ENCODE measurements at regions of chr9 and their contacts with region 1.

Region 1: DNA sequence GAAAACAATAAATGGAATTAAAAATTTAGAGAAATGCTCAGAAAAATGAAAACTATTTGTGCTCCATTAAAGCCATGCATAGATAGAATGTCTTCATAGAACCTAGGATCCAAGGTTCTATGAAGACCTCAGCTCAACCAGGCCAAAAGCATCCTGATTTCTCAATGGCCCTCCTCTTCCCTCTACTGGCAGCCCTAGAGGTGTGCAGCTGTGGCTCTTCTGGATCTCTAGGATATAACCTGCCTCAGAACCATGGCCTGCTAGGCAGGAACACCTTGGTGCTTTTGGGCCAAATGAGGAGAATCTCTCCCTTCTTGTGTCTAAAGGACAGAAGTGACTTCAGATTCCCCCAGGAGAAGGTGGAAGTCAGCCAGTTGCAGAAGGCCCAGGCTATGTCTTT is 15.1 kb downstream of the IFNA1 start:
- DNase-seq: peak in 4 of 9 experiments; percentile 13 to 62 (median 42)
- ATAC-seq: peak; percentile 94
- H3K4me3 ChIP-seq: no peak overlapping the region
- H3K4me3 Mint-ChIP-seq: no peak overlapping the region
- H3K27ac ChIP-seq: no peak overlapping the region
- H3K27ac Mint-ChIP-seq: no peak overlapping the region
- H3K4me1 ChIP-seq: no peaks in the 10 kb centered on the region
- H3K4me1 Mint-ChIP-seq: no peaks in the 10 kb centered on the region
- H3K27me3 ChIP-seq: no peaks in the 10 kb centered on the region
- H3K27me3 Mint-ChIP-seq: peaks cover 11% of the 10 kb centered on the region
- CTCF ChIP-seq: peak; percentile 52

Region 2: DNA sequence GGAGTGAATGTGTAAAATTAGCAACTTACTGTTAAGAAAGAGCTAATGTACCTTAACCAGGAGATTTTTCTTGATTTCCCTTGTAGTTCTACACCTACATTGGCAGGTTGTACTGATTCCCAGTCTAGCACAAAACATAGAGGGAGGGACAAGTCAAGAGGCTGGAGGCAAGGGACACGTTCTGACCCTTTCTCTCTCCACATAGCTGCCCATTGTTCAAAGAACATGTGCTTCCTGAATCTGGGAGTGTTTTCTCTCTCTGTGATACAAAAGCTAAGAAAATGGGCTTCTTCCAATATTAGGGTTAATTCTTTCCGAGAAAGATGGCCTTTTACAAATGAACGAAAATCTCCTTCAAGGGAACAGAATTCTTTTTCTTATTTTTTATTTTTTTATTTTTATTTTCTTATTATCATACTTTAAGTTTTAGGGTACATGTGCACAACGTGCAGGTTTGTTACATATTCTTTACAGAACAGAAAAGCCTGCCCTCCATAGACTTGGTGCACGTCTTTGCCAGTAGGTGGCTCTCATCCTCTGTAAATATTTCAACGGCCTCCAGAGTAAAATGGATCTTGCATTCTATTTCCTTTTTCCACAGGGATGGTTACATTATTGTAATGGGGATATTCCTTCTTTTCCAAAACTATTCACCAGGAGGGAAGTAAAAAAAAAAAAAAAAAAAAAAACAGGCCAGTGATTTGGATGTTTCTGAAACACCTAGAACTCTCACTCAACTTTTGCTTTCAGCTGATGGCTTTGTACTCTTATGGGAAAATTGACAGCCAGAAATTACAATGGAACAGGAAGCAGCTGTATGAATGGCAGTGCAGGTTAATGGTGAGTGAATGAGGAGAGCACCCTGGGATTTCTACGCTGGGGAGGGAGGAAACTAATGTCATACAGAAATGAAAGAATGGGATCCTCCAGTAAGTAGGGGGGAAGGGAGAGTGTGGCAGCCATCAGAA is 137.1 kb before region 1 on chr9:
- CTCF ChIA-PET with region 1: interaction called, 4 read pairs
- POLR2A ChIA-PET with region 1: no interaction called
- intact Hi-C with region 1: loop called in 1 of 2 experiments (anchors 1 kb)
- DNase-seq: peak in 3 of 9 experiments; percentile 29 to 63 (median 55)
- ATAC-seq: peak; percentile 86
- H3K4me3 ChIP-seq: no peak overlapping the region
- H3K4me3 Mint-ChIP-seq: no peak overlapping the region
- H3K27ac ChIP-seq: no peak overlapping the region
- H3K27ac Mint-ChIP-seq: no peak overlapping the region
- H3K4me1 ChIP-seq: no peaks in the 10 kb centered on the region
- H3K4me1 Mint-ChIP-seq: peaks cover 4% of the 10 kb centered on the region
- H3K27me3 ChIP-seq: no peaks in the 10 kb centered on the region
- H3K27me3 Mint-ChIP-seq: no peaks in the 10 kb centered on the region
- CTCF ChIP-seq: peak; percentile 94

Region 3: GRCh38 chr9:21434202-21435014 is 20.9 kb before region 1 on chr9:
- CTCF ChIA-PET with region 1: interaction called, 16 read pairs
- POLR2A ChIA-PET with region 1: no interaction called
- intact Hi-C with region 1: loop called (anchors 1 to 2 kb)
- DNase-seq: peak in 6 of 9 experiments; percentile 15 to 69 (median 46)
- ATAC-seq: peak; percentile 42
- H3K4me3 ChIP-seq: no peak overlapping the region
- H3K4me3 Mint-ChIP-seq: no peak overlapping the region
- H3K27ac ChIP-seq: no peak overlapping the region
- H3K27ac Mint-ChIP-seq: no peak overlapping the region
- H3K4me1 ChIP-seq: no peaks in the 10 kb centered on the region
- H3K4me1 Mint-ChIP-seq: peaks cover 2% of the 10 kb centered on the region
- H3K27me3 ChIP-seq: no peaks in the 10 kb centered on the region
- H3K27me3 Mint-ChIP-seq: peaks cover 21% of the 10 kb centered on the region
- CTCF ChIP-seq: peak; percentile 60

Measured in CD8-positive, alpha-beta T cell (primary cell).